Gastrocnemius medialis (tissue), 4 donors: ENCODE measurements at regions of chr9 and their contacts with region 1.

Region 1: GRCh38 chr9:113669522-113670115 is 206.1 kb downstream of the RGS3 start:
- DNase-seq: no peak
- ATAC-seq: no peak
- H3K4me3 ChIP-seq: no peak overlapping the region
- H3K27ac ChIP-seq: no peak overlapping the region
- H3K4me1 ChIP-seq: peaks cover 0 to 2% of the 10 kb centered on the region in 2 donors
- H3K27me3 ChIP-seq: peaks cover 0 to 3% (median 0%) of the 10 kb centered on the region in 3 donors
- CTCF ChIP-seq: no peak
- POLR2A ChIP-seq: no peak

Region 2: GRCh38 chr9:113427629-113428028 is 242.0 kb before region 1 on chr9:
- in situ Hi-C with region 1: loop called in 1 of 4 experiments (anchors 10 kb)
- intact Hi-C with region 1: no loop called
- DNase-seq: no peak
- ATAC-seq: peak in 1 of 2 donors; percentile 24
- H3K4me3 ChIP-seq: no peak overlapping the region
- H3K27ac ChIP-seq: no peak overlapping the region
- H3K4me1 ChIP-seq: no peaks in the 10 kb centered on the region
- H3K27me3 ChIP-seq: peaks cover 0 to 2% (median 0%) of the 10 kb centered on the region in 3 donors
- CTCF ChIP-seq: no peak
- POLR2A ChIP-seq: no peak

Region 3: GRCh38 chr9:113913426-113914195 is 244.0 kb after region 1 on chr9:
- in situ Hi-C with region 1: no loop called
- intact Hi-C with region 1: no loop called
- DNase-seq: peak; percentile 68 to 85
- ATAC-seq: peak; percentile 100
- H3K4me3 ChIP-seq: no peak overlapping the region
- H3K27ac ChIP-seq: peak overlapping the region; percentile 72 to 82 (median 78)
- H3K4me1 ChIP-seq: peaks cover 22 to 40% of the 10 kb centered on the region in 2 donors
- H3K27me3 ChIP-seq: no peaks in the 10 kb centered on the region
- CTCF ChIP-seq: no peak
- POLR2A ChIP-seq: no peak